Dorsolateral prefrontal cortex (tissue), 120 donors: ENCODE measurements at regions of chr13 and their contacts with region 1.

Region 1: GRCh38 chr13:23074075-23074828 is 106.5 kb upstream of the SGCG start:
- DNase-seq: no peak
- H3K4me3 ChIP-seq: no peak overlapping the region
- H3K27ac ChIP-seq: no peak overlapping the region
- H3K27me3 ChIP-seq: no peaks in the 10 kb centered on the region
- CTCF ChIP-seq: no peak

Region 2: GRCh38 chr13:23020223-23020843 is 53.9 kb before region 1 on chr13:
- intact Hi-C with region 1: loop called in 1 of 2 experiments (anchors 10 kb)
- DNase-seq: peak in 6 of 10 donors; percentile 5 to 47 (median 38)
- H3K4me3 ChIP-seq: no peak overlapping the region
- H3K27ac ChIP-seq: no peak overlapping the region
- H3K27me3 ChIP-seq: no peaks in the 10 kb centered on the region
- CTCF ChIP-seq: peak; percentile 59 to 86 (median 76)

Region 3: DNA sequence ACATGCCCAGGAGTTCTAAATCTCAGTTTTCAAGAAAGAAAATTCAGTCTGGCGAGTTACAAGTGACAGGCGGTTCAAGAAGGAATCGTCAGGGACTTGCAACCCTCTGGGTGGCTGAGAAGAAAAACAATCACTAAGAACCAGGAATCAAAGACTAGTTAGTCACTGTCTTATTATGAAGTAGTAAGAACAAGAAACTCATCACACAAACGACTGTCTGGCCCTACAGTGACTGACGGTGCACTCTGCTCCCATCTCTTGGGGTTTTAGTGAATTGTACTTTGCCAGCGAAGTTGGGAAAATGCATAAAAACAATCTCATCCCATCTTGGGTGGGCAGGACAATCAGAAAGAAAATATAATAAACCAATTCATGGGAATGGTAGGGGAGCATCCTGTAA is 422.9 kb after region 1 on chr13:
- intact Hi-C with region 1: no loop called
- DNase-seq: no peak
- H3K4me3 ChIP-seq: no peak overlapping the region
- H3K27ac ChIP-seq: no peak overlapping the region
- H3K27me3 ChIP-seq: peaks cover 0 to 25% (median 4%) of the 10 kb centered on the region in 45 donors
- CTCF ChIP-seq: no peak